ENCODE measurements at regions of chr1 and their contacts with region 1.

Region 1: DNA sequence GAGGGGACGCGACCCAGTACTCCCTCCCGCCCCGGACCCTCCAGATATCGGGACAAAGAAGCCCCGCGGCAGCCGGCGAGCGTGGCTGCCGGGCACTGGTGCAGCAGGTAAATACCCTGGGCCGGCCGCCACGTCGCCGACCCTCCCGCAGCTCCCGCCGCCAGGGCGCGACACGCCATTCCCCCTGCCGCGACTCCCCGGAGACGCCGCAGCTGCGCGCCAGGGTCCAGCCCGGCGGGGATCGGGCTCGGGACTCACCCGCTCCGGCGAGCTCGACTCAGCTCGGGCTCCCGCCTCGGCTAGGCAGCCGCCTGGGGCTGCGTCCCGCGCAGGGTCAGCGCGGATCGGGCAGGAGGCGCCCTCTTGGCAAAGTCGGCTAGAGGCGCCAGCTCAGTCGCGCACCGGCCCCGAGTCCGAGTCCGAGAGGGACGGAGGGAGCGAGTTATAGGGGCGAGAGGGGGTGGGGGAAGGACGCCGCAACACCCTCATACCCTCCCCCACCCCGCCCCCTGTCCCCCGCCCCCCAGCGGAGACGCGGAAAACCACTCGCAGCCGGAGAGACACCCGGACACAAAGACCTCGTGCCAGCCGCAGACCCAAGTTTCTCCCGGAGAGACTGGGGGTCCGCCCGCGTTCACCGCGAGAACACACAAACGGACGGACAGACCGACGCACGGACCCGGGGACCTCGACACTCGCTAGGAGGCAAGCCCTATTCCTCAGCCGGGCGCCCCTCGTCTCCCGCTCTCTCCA is 985 bp downstream of the SYT6 start:
- DNase-seq: peak in 1 of 2 experiments; percentile 71
- H3K4me3 ChIP-seq: peak overlapping the region; percentile 79 to 85 (median 82)
- H3K27ac ChIP-seq: no peak overlapping the region
- H3K4me1 ChIP-seq: peaks cover 9 to 45% (median 22%) of the 10 kb centered on the region in 4 experiments
- H3K27me3 ChIP-seq: peaks cover 0 to 22% (median 20%) of the 10 kb centered on the region in 4 experiments; a peak in 6 of 7 replicates
- CTCF ChIP-seq: no peak
- EP300 ChIP-seq: no peak
- POLR2A ChIP-seq: no peak
- RAD21 ChIP-seq: 0 out of 4 replicates have a peak, but pooled peaks of 1 of the 2 experiments have one; percentile 4

Region 2: DNA sequence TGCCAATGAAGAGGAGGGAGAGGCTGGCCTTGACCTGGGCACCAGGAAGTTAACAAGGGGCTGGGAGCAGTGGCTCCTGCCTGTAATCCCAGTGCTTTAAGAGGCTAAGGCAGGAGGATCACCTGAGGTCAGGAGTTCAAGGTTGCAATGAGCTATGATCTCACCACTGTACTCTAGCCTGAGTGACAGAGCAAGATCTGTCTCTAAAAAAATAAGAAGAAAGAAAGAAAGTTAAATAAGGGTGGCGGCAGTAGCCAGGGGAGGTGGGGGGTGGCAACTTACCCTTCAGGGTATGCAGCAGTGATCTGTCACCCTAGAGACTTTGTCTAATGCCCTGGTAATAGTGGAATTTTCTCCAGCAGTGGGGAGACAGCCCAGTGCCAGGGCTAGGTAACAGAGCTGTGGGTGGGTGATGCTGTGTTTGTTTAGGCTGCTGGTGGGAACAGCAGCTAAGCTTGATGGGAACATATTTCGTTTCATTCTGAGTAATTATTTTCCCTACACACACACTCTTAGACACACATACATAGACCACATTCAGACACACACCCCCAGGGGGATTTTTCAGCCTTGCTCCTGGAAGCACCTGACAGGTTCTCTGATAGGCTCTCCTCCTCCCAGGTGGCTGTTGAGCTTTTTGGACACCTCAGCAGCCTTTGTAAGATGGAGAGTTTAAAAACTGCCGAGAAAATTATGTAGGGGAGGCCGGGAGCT is 12.3 kb after region 1 on chr1:
- CTCF ChIA-PET with region 1: interaction called, 12 read pairs
- POLR2A ChIA-PET with region 1: interaction called, 5 read pairs
- DNase-seq: no peak
- H3K4me3 ChIP-seq: no peak overlapping the region
- H3K27ac ChIP-seq: no peak overlapping the region
- H3K4me1 ChIP-seq: peaks cover 0 to 3% (median 0%) of the 10 kb centered on the region in 4 experiments; a peak in 2 of 7 replicates
- H3K27me3 ChIP-seq: peaks cover 0 to 3% (median 0%) of the 10 kb centered on the region in 4 experiments; a peak in 1 of 7 replicates
- CTCF ChIP-seq: no peak
- EP300 ChIP-seq: no peak
- POLR2A ChIP-seq: no peak
- RAD21 ChIP-seq: no peak

Measured in H1 (cell line).